ENCODE measurements at regions of chr3 and their contacts with region 1.

Region 1: GRCh38 chr3:191523148-191523547 is 62.2 kb downstream of the PYDC2 start:
- DNase-seq: no peak
- ATAC-seq: no peak
- H3K4me3 Mint-ChIP-seq: no peak overlapping the region
- H3K27ac Mint-ChIP-seq: no peak overlapping the region
- H3K4me1 Mint-ChIP-seq: no peaks in the 10 kb centered on the region
- H3K27me3 Mint-ChIP-seq: no peaks in the 10 kb centered on the region
- CTCF ChIP-seq: no peak

Region 2: GRCh38 chr3:191509078-191509477 is 14.1 kb before region 1 on chr3:
- CTCF ChIA-PET with region 1: no interaction called
- POLR2A ChIA-PET with region 1: interaction called, 10 read pairs
- DNase-seq: no peak
- ATAC-seq: no peak
- H3K4me3 Mint-ChIP-seq: no peak overlapping the region
- H3K27ac Mint-ChIP-seq: no peak overlapping the region
- H3K4me1 Mint-ChIP-seq: peaks cover 5% of the 10 kb centered on the region
- H3K27me3 Mint-ChIP-seq: no peaks in the 10 kb centered on the region
- CTCF ChIP-seq: no peak

Region 3: DNA sequence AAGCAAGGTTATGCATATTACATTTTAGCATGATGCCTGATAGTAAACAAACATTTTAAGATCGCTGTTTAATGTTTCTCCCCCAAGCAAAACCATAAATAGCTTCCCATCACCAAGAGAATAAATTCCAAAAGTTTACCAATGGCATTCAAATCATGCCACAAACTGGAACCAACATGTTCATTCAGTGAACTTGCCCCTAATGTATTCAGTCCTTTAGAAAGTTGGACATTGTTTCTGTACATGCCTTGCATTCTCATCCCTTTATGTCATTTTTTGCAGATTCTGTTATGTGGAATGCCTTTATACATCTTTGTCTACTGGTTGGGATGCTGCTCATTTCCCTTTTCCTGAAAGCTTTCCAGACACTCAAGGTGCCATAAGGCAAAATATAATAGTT is 43.3 kb after region 1 on chr3:
- CTCF ChIA-PET with region 1: no interaction called
- POLR2A ChIA-PET with region 1: no interaction called
- DNase-seq: no peak
- ATAC-seq: no peak
- H3K4me3 Mint-ChIP-seq: no peak overlapping the region
- H3K27ac Mint-ChIP-seq: no peak overlapping the region
- H3K4me1 Mint-ChIP-seq: peaks cover 23% of the 10 kb centered on the region
- H3K27me3 Mint-ChIP-seq: no peaks in the 10 kb centered on the region
- CTCF ChIP-seq: no peak

Measured in WTC11 (cell line).